ENCODE measurements at regions of chrX and their contacts with region 1.

Region 1: DNA sequence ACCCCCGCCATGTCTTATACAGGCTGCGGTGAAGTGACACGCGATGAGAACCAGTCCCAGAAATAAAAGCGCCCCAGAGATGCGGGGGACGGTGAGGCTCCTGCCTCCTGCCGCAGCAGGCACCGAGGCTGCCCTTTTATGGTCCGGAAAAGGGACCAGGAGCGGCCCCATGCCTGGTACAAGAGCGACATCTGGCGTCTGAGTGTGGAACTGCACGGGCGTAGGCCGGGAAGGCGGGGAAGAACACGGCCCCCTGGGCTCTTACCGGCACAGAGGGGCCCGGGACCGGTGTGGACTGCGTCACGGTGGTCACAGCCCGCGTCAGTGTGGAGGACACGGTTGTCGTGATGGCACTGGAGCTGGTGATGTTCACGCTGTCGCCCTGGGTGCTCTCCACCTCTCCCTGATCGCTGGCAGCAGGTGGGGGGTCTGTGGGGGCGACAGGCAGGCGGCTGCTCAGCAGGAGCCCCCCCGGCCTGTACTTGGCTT is 8.9 kb upstream of the RENBP start:
- DNase-seq: peak in 1 of 2 donors; percentile 89
- H3K4me3 ChIP-seq: peak overlapping the region in 1 of 2 donors; percentile 27
- H3K27ac ChIP-seq: peak overlapping the region; percentile 69 to 78
- H3K4me1 ChIP-seq: peaks cover 4 to 16% of the 10 kb centered on the region in 2 donors
- H3K27me3 ChIP-seq: no peaks in the 10 kb centered on the region
- CTCF ChIP-seq: peak; percentile 97 to 100 (median 99)

Region 2: DNA sequence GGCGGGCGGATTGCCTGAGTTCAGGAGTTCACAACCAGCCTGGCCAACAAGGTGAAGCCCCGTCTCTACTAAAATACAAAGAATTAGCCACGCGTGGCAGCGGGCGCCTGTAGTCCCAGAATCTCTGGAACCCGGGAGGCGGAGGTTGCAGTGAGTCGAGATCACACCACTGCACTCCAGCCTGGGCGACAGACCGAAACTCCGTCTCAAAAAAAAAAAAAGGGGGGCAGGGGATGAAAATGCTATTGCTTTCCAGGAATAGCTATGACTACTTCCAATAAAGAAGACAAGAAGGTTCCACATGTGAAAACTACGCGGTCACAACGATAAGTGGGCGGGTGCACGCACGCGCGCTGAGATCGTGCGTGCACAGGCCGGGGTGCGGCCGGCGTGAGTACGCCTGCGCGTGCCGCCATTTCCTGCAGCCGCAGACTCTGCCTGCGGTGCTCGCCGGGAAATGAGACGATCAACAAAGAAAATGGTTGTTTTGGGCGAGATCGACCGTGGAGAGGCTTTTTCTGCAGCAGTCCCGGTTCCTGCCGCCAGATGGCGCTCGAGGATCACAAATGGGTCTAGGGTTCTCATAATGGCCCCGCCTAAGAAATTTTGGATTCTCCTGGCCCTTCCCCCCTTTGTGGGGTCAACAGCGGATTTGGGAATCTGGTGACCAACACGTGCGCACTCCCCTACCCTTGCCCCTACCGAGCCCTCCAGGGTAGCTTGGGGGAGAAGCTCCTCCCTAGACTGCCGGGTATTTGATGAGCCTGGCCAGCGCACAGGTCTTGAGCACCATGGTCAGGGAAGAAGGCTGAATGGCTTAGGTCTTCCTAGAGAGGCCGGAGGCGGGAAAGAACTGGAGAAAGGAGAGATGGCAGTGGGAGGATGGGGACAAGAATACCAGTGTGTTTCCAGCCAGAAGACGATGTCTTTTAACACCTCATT is 994.6 kb before region 1 on chrX:
- intact Hi-C with region 1: loop called (anchors 5 kb)
- DNase-seq: peak; percentile 42 to 93
- H3K4me3 ChIP-seq: peak overlapping the region; percentile 29 to 36
- H3K27ac ChIP-seq: peak overlapping the region; percentile 40 to 54
- H3K4me1 ChIP-seq: no peaks in the 10 kb centered on the region
- H3K27me3 ChIP-seq: no peaks in the 10 kb centered on the region
- CTCF ChIP-seq: peak; percentile 80 to 86 (median 84)

Region 3: GRCh38 chrX:153519569-153520283 is 433.7 kb before region 1 on chrX:
- intact Hi-C with region 1: loop called (anchors 10 kb)
- DNase-seq: no peak
- H3K4me3 ChIP-seq: no peak overlapping the region
- H3K27ac ChIP-seq: no peak overlapping the region
- H3K4me1 ChIP-seq: no peaks in the 10 kb centered on the region
- H3K27me3 ChIP-seq: peaks cover 8% of the 10 kb centered on the region
- CTCF ChIP-seq: no peak

Region 4: DNA sequence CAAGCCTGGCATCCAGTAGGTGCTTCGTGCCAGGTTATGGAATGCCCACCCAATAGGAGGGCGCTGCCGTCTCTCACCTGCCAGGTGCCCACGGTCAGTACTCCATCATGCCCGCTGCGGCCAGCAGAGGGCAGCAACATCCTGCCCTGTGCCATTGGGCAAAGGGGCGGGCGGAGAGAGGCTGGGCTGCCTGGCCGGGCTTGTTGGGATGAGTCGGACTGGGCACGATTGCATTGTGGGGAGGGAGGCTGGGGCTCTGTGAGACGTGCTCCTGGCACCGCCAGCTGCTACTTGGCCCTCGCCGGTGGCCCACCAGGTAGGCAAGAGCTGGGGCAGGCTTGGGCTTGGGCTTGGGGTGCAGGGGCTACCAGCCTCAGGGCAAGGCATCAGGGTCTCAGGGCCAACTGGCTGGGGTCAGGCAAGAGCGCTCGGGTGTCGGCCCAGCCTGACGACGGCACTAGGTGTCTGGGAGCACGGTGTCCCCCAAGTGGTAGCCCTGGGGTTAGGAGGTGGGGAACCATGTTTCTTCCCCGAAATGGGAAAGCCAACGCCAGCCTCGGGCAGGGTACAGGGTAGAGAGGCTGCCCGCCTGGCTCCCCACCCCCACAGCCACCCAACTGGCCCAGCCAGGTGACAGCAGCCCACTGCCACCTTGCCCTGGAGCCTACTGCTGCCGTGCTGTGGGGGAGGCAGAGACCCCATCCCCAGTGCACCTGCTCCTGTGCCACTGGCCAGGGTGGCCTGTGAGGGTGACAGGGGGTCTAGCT is 189.2 kb before region 1 on chrX and contains the start of gene PLXNB3:
- intact Hi-C with region 1: loop called (anchors 1 kb)
- DNase-seq: peak; percentile 32 to 90
- H3K4me3 ChIP-seq: peak within 1 kb of the TSS; percentile 31 to 56
- H3K27ac ChIP-seq: peak within 1 kb of the TSS; percentile 58 to 59
- H3K4me1 ChIP-seq: peaks cover 0 to 8% of the 10 kb centered on the region in 2 donors
- H3K27me3 ChIP-seq: no peaks in the 10 kb centered on the region
- CTCF ChIP-seq: peak; percentile 81 to 87 (median 82)
- total RNA-seq, gene PLXNB3: 99.1 TPM

Region 5: DNA sequence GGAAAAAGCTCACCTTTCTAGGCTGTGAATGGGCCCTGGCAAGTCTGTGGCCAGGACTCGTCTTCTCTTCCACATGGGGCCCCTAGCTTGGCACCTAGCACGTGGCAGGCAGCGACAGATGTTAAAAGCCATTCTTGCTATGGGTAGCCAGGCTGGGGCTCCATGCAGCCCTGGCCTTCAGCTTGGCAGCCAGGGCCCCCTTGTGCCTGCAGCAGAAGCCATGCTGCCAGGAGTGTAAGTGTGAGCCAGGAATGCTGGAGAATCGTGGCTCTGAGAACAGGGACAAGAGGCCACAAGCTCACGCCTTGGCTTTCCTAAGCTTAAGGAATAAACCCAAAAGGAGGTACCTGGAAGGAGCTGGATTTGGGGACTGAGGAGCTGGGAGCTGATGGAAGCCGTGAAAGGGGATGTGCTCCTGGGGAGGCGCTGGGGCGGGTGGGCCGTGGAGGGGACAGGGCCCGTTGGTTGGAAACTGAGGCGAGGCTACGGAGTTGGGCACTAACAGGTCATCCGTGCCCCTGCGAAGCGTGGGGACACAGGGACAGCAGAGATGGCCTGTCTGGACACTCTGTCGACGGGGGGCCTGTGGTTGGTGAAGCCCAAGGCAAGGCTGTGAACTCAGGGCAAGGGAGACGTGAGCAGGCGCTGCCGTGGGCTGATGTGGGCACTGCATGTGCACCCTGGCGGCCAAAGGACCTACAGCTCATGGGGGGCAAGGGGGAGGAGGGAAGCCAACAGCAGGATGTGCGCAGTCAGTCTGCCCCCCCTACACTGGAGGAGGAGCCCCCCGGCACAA is 189.8 kb after region 1 on chrX:
- intact Hi-C with region 1: no loop called
- DNase-seq: no peak
- H3K4me3 ChIP-seq: no peak overlapping the region
- H3K27ac ChIP-seq: no peak overlapping the region
- H3K4me1 ChIP-seq: no peaks in the 10 kb centered on the region
- H3K27me3 ChIP-seq: no peaks in the 10 kb centered on the region
- CTCF ChIP-seq: no peak

Measured in ascending aorta (tissue), 2 donors.